Mammary epithelial cell (primary cell): ENCODE measurements at regions of chr16 and their contacts with region 1.

Region 1: GRCh38 chr16:26765087-26765486 is 301.6 kb upstream of the C16orf82 start:
- DNase-seq: no peak
- H3K4me3 ChIP-seq: no peak overlapping the region
- H3K27ac ChIP-seq: no peak overlapping the region
- H3K4me1 ChIP-seq: no peaks in the 10 kb centered on the region
- H3K27me3 ChIP-seq: no peaks in the 10 kb centered on the region
- CTCF ChIP-seq: peak; percentile 15 to 20

Region 2: GRCh38 chr16:26727848-26728247 is 37.2 kb before region 1 on chr16:
- CTCF ChIA-PET with region 1: no interaction called
- dilution Hi-C with region 1: loop called (anchors 5 kb)
- in situ Hi-C with region 1: no loop called
- intact Hi-C with region 1: no loop called
- DNase-seq: no peak
- H3K4me3 ChIP-seq: no peak overlapping the region
- H3K27ac ChIP-seq: no peak overlapping the region
- H3K4me1 ChIP-seq: no peaks in the 10 kb centered on the region
- H3K27me3 ChIP-seq: no peaks in the 10 kb centered on the region
- CTCF ChIP-seq: no peak

Region 3: GRCh38 chr16:26816885-26817571 is 51.9 kb after region 1 on chr16:
- CTCF ChIA-PET with region 1: no interaction called
- dilution Hi-C with region 1: loop called (anchors 5 kb)
- in situ Hi-C with region 1: no loop called
- intact Hi-C with region 1: no loop called
- DNase-seq: no peak
- H3K4me3 ChIP-seq: no peak overlapping the region
- H3K27ac ChIP-seq: no peak overlapping the region
- H3K4me1 ChIP-seq: no peaks in the 10 kb centered on the region
- H3K27me3 ChIP-seq: no peaks in the 10 kb centered on the region
- CTCF ChIP-seq: no peak